Activated CD4-positive, alpha-beta T cell treated with anti-CD3 and anti-CD28 coated beads for 36 hours (primary cell): ENCODE measurements at regions of chr19 and their contacts with region 1.

Region 1: GRCh38 chr19:42325273-42325895 is at the start of gene MEGF8:
- DNase-seq: peak; percentile 99
- ATAC-seq: peak; percentile 98
- H3K4me3 Mint-ChIP-seq: peak within 1 kb of the TSS; percentile 80
- H3K27ac Mint-ChIP-seq: peak within 1 kb of the TSS; percentile 69
- H3K4me1 Mint-ChIP-seq: peaks cover 12% of the 10 kb centered on the region
- H3K27me3 Mint-ChIP-seq: peaks cover 12% of the 10 kb centered on the region
- total RNA-seq, gene MEGF8: 5.2 to 5.3 TPM

Region 2: GRCh38 chr19:41775360-41775695 is 550.1 kb before region 1 on chr19:
- CTCF ChIA-PET with region 1: no interaction called
- POLR2A ChIA-PET with region 1: no interaction called
- intact Hi-C with region 1: no loop called
- DNase-seq: no peak
- ATAC-seq: no peak
- H3K4me3 Mint-ChIP-seq: no peak overlapping the region
- H3K27ac Mint-ChIP-seq: no peak overlapping the region
- H3K4me1 Mint-ChIP-seq: peaks cover 33% of the 10 kb centered on the region
- H3K27me3 Mint-ChIP-seq: peaks cover 68% of the 10 kb centered on the region

Region 3: GRCh38 chr19:41959056-41960053 is 366.0 kb before region 1 on chr19 and contains the start of gene RABAC1:
- CTCF ChIA-PET with region 1: no interaction called
- POLR2A ChIA-PET with region 1: no interaction called
- intact Hi-C with region 1: loop called in 1 of 2 experiments (anchors 1 kb)
- DNase-seq: peak; percentile 94
- ATAC-seq: peak; percentile 88
- H3K4me3 Mint-ChIP-seq: peak within 1 kb of the TSS; percentile 81
- H3K27ac Mint-ChIP-seq: peak within 1 kb of the TSS; percentile 87
- H3K4me1 Mint-ChIP-seq: peaks cover 16% of the 10 kb centered on the region
- H3K27me3 Mint-ChIP-seq: no peaks in the 10 kb centered on the region
- total RNA-seq, gene RABAC1: 35.3 to 49.7 TPM

Region 4: GRCh38 chr19:42176990-42177685 is 148.2 kb before region 1 on chr19:
- CTCF ChIA-PET with region 1: no interaction called
- POLR2A ChIA-PET with region 1: no interaction called
- intact Hi-C with region 1: loop called in 1 of 2 experiments (anchors 1 kb)
- DNase-seq: peak; percentile 88
- ATAC-seq: peak; percentile 95
- H3K4me3 Mint-ChIP-seq: no peak overlapping the region
- H3K27ac Mint-ChIP-seq: no peak overlapping the region
- H3K4me1 Mint-ChIP-seq: peaks cover 15% of the 10 kb centered on the region
- H3K27me3 Mint-ChIP-seq: peaks cover 24% of the 10 kb centered on the region

Region 5: DNA sequence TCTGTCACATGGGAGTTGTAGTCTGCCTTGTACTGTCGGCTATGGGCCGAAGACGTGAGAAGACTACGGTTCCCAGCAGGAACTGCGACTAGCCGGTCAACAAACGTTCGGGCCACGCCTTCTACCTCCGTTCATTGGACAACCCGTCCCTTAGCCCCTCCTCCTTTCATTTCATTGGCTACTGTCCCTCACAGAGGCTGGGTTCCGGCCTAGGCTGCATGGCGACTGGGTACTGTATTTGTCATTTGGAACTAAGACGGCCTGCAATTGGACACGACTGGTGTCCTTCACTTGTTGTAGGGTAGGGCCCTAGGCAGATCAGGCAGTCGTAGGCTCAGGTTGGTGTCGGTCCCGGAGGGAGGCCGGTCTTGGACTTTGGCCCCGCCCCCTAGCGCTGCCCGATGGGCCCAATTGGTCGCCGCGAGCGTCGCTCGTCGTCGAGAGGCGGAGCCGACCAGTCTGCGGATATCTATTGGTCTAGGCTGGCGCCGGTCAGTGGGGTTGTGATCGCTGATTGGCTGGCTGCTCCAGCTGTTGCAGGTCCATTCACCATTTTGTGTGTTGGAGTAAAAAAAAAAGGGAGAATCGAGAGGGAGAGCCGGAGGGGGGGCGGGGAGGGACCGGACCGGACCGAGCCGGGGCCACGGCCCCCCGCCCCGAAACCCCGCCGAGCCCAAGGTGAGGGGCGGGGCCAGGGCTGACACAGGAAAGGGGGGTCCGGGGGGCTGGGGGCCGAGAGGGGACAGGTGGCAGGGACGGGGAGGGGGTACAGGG is 56.5 kb before region 1 on chr19 and contains the start of gene CIC:
- CTCF ChIA-PET with region 1: no interaction called
- POLR2A ChIA-PET with region 1: no interaction called
- intact Hi-C with region 1: loop called in 1 of 2 experiments (anchors 1 kb)
- DNase-seq: peak; percentile 100
- ATAC-seq: peak; percentile 87
- H3K4me3 Mint-ChIP-seq: no peak within 1 kb of the TSS
- H3K27ac Mint-ChIP-seq: peak within 1 kb of the TSS; percentile 97
- H3K4me1 Mint-ChIP-seq: peaks cover 24% of the 10 kb centered on the region
- H3K27me3 Mint-ChIP-seq: no peaks in the 10 kb centered on the region
- total RNA-seq, gene CIC: 62.8 to 66.3 TPM

Region 6: GRCh38 chr19:42301656-42302203 is 23.7 kb before region 1 on chr19 and contains the start of gene PRR19:
- CTCF ChIA-PET with region 1: interaction called, 3 read pairs
- POLR2A ChIA-PET with region 1: no interaction called
- intact Hi-C with region 1: loop called in 1 of 2 experiments (anchors 1 kb)
- DNase-seq: peak; percentile 50
- ATAC-seq: peak; percentile 25
- H3K4me3 Mint-ChIP-seq: peak within 1 kb of the TSS; percentile 83
- H3K27ac Mint-ChIP-seq: peak within 1 kb of the TSS; percentile 85
- H3K4me1 Mint-ChIP-seq: peaks cover 19% of the 10 kb centered on the region
- H3K27me3 Mint-ChIP-seq: no peaks in the 10 kb centered on the region
- total RNA-seq, gene PRR19: 0.63 to 1.0 TPM

Region 7: DNA sequence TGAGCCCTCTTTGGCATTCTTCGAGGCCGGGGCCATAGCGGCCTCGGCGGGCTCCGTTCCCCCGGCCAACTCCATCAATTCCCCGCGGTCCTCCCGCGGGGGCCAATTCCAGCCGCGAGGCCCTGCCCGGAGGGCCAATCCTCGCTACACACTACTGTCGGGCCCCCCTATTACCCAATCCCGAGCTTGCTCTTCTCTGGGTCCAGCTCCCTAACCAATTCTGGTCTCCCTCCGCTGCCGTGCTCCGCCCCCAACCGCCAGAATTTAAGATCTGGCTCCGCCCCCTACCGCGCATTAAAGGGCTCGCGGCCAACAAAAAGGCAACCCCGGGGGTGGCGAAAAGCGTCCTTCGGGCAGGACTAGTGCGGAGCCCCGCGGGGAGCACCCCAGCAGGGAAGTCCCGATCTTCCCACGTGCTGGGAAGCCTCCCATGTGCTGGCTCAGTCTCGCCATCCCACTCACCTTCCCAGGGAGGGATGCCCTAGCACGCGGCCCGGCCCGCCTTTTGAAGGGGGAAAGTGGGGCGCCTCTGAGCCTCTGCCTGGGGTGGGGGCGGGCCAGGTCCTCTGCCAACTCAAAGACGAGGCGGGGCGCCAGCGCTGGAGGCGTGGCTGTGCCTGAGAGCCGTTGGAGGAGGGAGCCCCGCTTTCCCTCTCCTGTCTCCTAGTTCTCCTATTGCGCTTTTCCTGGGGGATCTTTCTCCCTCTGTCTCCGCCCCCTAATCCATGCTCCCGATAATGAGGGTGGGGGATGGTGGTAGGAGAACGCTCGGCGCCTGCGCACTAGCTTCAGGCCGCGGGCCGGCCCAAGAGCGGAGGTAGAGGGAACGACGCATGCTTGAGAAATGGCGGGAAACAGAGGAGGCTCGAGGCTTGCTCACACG is 98.3 kb after region 1 on chr19:
- CTCF ChIA-PET with region 1: no interaction called
- POLR2A ChIA-PET with region 1: no interaction called
- intact Hi-C with region 1: loop called (anchors 1 kb)
- DNase-seq: peak; percentile 96
- ATAC-seq: peak; percentile 91
- H3K4me3 Mint-ChIP-seq: peak overlapping the region; percentile 86
- H3K27ac Mint-ChIP-seq: peak overlapping the region; percentile 92
- H3K4me1 Mint-ChIP-seq: peaks cover 40% of the 10 kb centered on the region
- H3K27me3 Mint-ChIP-seq: no peaks in the 10 kb centered on the region